Naive thymus-derived CD4-positive, alpha-beta T cell (primary cell): ENCODE measurements at regions of chr3 and their contacts with region 1.

Region 1: DNA sequence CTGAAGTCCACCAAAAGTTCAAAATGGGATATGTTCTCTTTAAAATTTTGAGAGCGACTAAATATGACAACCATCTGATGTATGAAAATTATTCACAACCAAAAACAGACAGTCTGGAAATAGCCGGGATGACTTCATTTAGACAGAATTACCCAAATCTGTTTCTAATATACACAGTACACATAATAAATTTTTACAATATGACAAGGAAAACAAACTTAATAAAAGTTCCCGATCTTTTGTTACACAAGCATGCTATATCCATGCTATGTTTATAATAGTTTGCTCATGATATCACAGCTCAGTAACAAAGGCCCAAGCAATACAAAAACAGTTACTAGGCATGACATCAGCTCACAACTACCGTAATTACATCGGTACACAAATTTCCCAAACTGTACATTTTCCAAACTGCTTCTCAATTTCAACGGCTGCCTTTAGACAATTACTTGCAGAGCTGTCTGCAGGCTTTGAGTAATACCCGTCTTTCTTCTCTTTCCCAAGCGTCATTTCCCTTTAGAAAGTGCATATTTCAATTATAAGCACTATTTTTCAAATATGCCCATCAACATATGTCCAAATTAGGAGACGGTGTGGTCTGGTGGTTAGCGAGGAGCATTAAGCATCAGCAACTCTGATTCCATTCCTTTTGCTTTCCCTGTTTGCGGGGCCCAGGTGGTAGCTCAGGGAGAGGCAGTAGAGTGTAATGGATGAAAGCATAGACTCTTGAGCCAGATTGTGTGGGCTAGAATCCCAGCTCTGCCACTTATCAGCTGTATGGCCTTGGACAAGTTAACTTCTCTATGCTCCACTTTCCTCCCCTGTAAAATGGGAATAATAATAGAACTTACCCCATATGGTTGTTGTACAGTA is 481.2 kb downstream of the FOXP1 start:
- DNase-seq: no peak
- ATAC-seq: peak; percentile 26
- H3K4me3 ChIP-seq: no peak overlapping the region
- H3K4me3 Mint-ChIP-seq: peak overlapping the region in 7 of 10 donors; percentile 8 to 58 (median 30)
- H3K27ac ChIP-seq: no peak overlapping the region
- H3K27ac Mint-ChIP-seq: peak overlapping the region in 8 of 9 donors; percentile 52 to 93 (median 80)
- H3K4me1 ChIP-seq: peaks cover 33 to 57% of the 10 kb centered on the region in 2 donors
- H3K4me1 Mint-ChIP-seq: peaks cover 46 to 99% (median 88%) of the 10 kb centered on the region in 7 donors
- H3K27me3 ChIP-seq: no peaks in the 10 kb centered on the region
- H3K27me3 Mint-ChIP-seq: no peaks in the 10 kb centered on the region

Region 2: DNA sequence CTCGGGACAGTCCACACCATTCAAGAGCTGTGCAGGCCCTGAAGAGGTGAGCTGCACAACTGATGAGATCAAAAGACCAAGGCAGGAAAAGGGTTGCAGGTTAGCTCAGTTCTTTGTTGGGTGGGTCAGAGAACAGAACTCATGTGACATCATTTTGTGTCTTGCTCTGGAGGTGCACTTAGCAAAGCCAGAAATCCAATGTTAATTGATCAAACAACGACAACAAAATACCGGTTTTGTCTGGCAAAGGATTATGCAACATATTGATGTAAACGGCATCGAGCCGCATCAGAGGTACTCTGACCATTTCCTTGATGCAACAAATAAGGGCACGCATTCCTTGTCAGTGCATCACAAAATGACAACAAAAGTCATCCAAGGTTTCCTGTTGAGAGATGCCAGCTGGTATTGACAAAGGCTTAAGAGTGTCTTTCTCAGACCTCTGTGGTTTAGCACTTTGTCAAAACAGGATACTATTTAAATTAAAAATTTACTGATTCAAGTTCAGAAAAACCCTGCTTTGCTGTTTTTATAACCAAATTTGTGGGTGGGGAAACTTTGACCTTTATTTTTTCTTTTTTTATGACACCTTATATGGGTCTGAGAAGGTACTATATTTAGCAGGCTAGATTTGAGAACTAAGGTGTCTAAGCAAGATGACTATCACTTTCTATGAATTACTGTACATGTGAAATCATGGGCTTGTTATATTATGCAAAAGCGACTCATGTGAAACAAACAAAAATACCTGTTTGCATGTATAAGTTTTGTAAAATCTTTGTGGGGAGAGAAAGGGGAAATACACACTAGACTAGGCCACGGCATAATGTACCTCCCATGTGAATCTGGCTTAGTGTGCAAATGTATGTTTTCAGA is 15.0 kb before region 1 on chr3:
- CTCF ChIA-PET with region 1: no interaction called
- POLR2A ChIA-PET with region 1: interaction called, 3 read pairs
- intact Hi-C with region 1: loop called in 1 of 2 experiments (anchors 1 kb)
- DNase-seq: peak in 8 of 9 donors; percentile 39 to 76 (median 58)
- ATAC-seq: peak; percentile 79
- H3K4me3 ChIP-seq: peak overlapping the region; percentile 7
- H3K4me3 Mint-ChIP-seq: peak overlapping the region; percentile 39 to 78 (median 70)
- H3K27ac ChIP-seq: peak overlapping the region; percentile 42
- H3K27ac Mint-ChIP-seq: peak overlapping the region; percentile 43 to 98 (median 92)
- H3K4me1 ChIP-seq: peaks cover 34 to 69% of the 10 kb centered on the region in 2 donors
- H3K4me1 Mint-ChIP-seq: peaks cover 61 to 94% (median 89%) of the 10 kb centered on the region in 7 donors
- H3K27me3 ChIP-seq: no peaks in the 10 kb centered on the region
- H3K27me3 Mint-ChIP-seq: no peaks in the 10 kb centered on the region

Region 3: DNA sequence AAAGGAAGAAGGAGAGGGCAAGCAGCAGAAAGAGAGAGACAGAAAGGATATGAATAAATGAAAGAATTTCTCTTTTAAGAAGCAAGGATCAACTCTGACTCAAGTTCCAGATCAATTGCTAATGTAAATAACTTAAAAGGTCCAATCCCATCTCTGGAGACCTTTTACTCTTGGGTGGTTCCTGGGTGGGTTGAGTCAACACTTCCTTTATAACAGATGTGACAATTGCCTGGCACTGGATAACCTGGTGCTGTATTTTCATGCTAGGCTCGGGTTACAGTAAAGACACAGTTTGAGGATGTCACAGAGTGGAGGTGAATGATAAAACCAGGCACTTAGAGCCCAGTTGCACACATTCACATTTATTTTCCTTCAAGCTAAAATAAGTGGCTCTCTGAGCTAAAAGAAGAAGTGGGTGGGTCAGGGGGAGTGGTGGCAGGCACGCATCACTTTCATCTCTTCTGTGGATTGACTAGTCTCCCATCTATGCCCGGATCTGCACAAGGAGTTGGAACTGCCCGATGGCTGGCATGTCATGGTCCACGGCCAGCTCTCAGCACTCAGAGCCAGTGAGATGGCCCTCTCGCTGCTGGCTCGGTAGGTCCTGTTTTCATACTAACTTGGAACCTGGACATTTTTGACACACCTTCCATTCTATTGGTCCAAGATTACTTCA is 15.4 kb after region 1 on chr3:
- CTCF ChIA-PET with region 1: no interaction called
- POLR2A ChIA-PET with region 1: interaction called, 3 read pairs
- intact Hi-C with region 1: loop called in 1 of 2 experiments (anchors 2 kb)
- DNase-seq: no peak
- ATAC-seq: no peak
- H3K4me3 ChIP-seq: no peak overlapping the region
- H3K4me3 Mint-ChIP-seq: peak overlapping the region in 5 of 10 donors; percentile 0 to 52 (median 25)
- H3K27ac ChIP-seq: no peak overlapping the region
- H3K27ac Mint-ChIP-seq: peak overlapping the region in 8 of 9 donors; percentile 43 to 93 (median 80)
- H3K4me1 ChIP-seq: peaks cover 3 to 71% of the 10 kb centered on the region in 2 donors
- H3K4me1 Mint-ChIP-seq: peaks cover 48 to 94% (median 89%) of the 10 kb centered on the region in 7 donors
- H3K27me3 ChIP-seq: no peaks in the 10 kb centered on the region
- H3K27me3 Mint-ChIP-seq: no peaks in the 10 kb centered on the region

Region 4: DNA sequence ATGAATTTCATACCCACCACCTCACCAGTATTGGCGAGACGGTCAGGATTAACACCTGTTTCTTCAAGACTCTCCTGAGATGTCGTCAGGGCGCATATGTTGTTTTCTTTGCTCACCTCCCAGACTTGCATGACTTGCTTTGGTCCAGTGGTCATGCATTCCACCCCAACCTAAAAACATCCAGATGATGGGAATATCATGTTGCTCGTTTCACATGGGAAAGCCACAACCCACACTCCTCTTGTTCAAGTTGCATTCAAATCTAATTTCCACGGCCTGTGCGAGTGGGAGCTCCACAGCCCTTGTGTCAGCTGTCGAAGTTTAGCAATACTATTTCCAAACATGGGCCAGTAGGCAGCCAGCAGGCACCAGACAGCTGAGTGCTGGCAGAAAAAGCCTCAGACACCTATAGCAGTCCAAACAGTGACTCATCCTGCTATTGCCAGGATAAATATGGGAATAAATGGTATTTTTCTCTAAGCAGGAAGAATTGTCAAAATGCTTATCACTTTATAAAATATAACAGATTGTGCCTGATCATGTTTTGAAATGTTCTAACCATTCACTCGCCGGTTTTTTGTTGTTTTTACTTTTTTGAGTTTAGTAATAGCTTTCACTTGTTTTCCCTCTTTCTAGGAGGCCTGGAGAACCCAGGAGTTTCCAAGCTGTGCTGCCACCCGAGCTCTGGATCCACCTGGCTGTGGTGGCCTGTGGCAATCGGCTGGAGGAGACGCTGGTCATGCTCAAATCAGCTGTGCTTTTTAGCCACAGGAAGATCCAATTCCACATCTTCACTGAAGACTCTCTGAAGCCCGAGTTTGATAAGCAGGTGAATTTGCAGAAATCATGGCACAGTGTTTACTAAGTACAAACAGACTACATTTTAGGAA is 1805.6 kb after region 1 on chr3:
- CTCF ChIA-PET with region 1: no interaction called
- POLR2A ChIA-PET with region 1: no interaction called
- intact Hi-C with region 1: no loop called
- DNase-seq: no peak
- ATAC-seq: no peak
- H3K4me3 ChIP-seq: no peak overlapping the region
- H3K4me3 Mint-ChIP-seq: no peak overlapping the region
- H3K27ac ChIP-seq: no peak overlapping the region
- H3K27ac Mint-ChIP-seq: no peak overlapping the region
- H3K4me1 ChIP-seq: no peaks in the 10 kb centered on the region
- H3K4me1 Mint-ChIP-seq: no peaks in the 10 kb centered on the region
- H3K27me3 ChIP-seq: no peaks in the 10 kb centered on the region
- H3K27me3 Mint-ChIP-seq: peaks cover 0 to 20% (median 5%) of the 10 kb centered on the region in 5 donors